ENCODE measurements at regions of chr1 and their contacts with region 1.

Region 1: GRCh38 chr1:229661022-229661877 is 35.2 kb downstream of the URB2 start:
- DNase-seq: peak; percentile 90
- H3K4me3 ChIP-seq: no peak overlapping the region
- H3K27ac ChIP-seq: no peak overlapping the region
- H3K4me1 ChIP-seq: no peaks in the 10 kb centered on the region
- H3K27me3 ChIP-seq: no peaks in the 10 kb centered on the region

Region 2: GRCh38 chr1:229848752-229849677 is 187.8 kb after region 1 on chr1:
- in situ Hi-C with region 1: no loop called
- DNase-seq: peak; percentile 56
- H3K4me3 ChIP-seq: no peak overlapping the region
- H3K27ac ChIP-seq: no peak overlapping the region
- H3K4me1 ChIP-seq: no peaks in the 10 kb centered on the region
- H3K27me3 ChIP-seq: peaks cover 9% of the 10 kb centered on the region; the same call in 1 of the 2 replicates

Region 3: GRCh38 chr1:230310381-230311163 is 649.3 kb after region 1 on chr1:
- in situ Hi-C with region 1: loop called (anchors 25 kb)
- DNase-seq: peak; percentile 81
- H3K4me3 ChIP-seq: no peak overlapping the region
- H3K27ac ChIP-seq: no peak overlapping the region
- H3K4me1 ChIP-seq: 0 out of 2 replicates have a peak, but pooled peaks cover 4% of the 10 kb centered on the region
- H3K27me3 ChIP-seq: peaks cover 4% of the 10 kb centered on the region

Measured in GM23248 (cell line).